A549 (cell line): ENCODE measurements at regions of chr2 and their contacts with region 1.

Region 1: GRCh38 chr2:5203134-5203740 is 488.9 kb upstream of the SOX11 start:
- DNase-seq: no peak
- ATAC-seq: no peak
- H3K4me3 ChIP-seq: no peak overlapping the region
- H3K27ac ChIP-seq: no peak overlapping the region
- H3K4me1 ChIP-seq: no peaks in the 10 kb centered on the region
- CTCF ChIP-seq: no peak
- EP300 ChIP-seq: no peak
- POLR2A ChIP-seq: no peak
- RAD21 ChIP-seq: no peak

Region 2: GRCh38 chr2:4930704-4931103 is 272.5 kb before region 1 on chr2:
- CTCF ChIA-PET with region 1: no interaction called
- POLR2A ChIA-PET with region 1: no interaction called
- DNase-seq: no peak
- ATAC-seq: no peak
- H3K4me3 ChIP-seq: no peak overlapping the region
- H3K27ac ChIP-seq: no peak overlapping the region
- H3K4me1 ChIP-seq: no peaks in the 10 kb centered on the region
- CTCF ChIP-seq: no peak
- EP300 ChIP-seq: no peak
- POLR2A ChIP-seq: no peak
- RAD21 ChIP-seq: no peak

Region 3: GRCh38 chr2:5693287-5694201 is 490.3 kb after region 1 on chr2:
- CTCF ChIA-PET with region 1: no interaction called
- POLR2A ChIA-PET with region 1: interaction called, 11 read pairs
- DNase-seq: peak in 1 of 2 experiments; percentile 16
- ATAC-seq: peak in 1 of 2 experiments; percentile 49; a peak in 3 of 6 replicates
- H3K4me3 ChIP-seq: no peak overlapping the region
- H3K27ac ChIP-seq: no peak overlapping the region
- H3K4me1 ChIP-seq: no peaks in the 10 kb centered on the region
- CTCF ChIP-seq: no peak
- EP300 ChIP-seq: no peak
- POLR2A ChIP-seq: no peak
- RAD21 ChIP-seq: no peak